Mammary epithelial cell (primary cell): ENCODE measurements at regions of chr12 and their contacts with region 1.

Region 1: DNA sequence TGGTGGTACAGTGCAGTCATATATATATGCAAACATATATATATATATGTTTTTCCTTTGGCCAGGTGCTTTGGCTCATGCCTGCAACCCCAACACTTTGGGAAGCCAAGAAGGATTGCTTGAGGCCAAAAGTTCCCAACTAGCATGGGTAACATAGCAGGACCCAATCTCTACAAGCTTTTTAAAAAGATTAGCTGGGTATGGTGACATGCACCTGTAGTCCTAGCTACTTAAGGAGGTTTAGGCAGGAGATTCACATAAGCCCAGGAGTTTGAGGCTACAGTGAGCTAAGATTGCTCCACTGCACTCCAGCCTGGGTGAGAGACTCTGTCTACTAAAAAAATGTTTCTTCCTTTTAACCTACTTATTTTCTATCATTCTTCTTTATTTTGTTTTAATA is 10.2 kb downstream of the PZP start:
- DNase-seq: no peak
- H3K4me3 ChIP-seq: no peak overlapping the region
- H3K27ac ChIP-seq: no peak overlapping the region
- H3K4me1 ChIP-seq: no peaks in the 10 kb centered on the region
- H3K27me3 ChIP-seq: peaks cover 2% of the 10 kb centered on the region
- CTCF ChIP-seq: no peak

Region 2: DNA sequence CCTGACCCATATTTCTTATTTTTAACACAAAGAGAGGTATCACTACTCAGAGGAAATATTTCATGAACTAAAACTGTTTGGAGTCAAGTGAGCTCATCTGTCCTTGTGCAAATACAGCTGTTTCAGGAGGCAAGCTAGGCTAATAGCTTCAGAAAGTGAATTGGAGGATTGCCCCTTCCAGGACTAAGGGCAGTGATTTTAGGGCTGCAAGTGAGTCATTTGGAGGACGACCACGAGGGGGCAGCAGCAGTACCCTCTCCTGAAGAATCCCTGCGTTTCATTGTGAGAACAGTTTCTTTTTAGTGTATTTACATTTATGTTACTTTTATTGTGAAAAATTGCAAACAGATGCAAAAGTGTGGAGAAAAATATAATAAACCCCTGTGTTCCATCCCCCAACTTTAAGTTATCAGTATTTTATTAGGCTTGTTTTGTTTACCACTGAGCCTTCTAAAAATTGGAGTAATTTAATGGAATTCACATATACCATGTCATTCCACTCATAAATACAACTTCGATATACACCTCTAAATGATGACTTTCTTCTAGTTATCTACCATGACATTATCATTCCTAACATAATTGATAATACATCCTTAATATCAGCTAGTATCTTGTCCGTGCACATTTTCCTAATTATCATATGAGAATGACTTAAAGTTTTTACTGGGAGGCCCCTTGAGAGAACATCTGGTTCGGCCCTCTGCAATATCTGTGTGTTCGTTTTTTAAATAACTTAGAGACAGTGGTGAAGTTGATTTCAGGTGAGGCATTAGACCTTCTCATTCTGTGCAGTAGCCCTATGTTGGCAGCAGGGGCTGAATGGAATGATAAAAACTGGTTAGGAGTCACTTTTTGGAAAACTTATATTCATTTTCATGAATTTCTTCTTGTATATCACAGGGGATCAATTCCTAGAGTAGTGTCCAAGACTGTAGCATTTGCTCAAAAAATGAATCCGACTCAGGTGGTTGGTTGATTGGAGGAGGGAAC is 1151.8 kb before region 1 on chr12:
- CTCF ChIA-PET with region 1: no interaction called
- dilution Hi-C with region 1: no loop called
- in situ Hi-C with region 1: no loop called
- intact Hi-C with region 1: no loop called
- DNase-seq: peak; percentile 43
- H3K4me3 ChIP-seq: no peak overlapping the region
- H3K27ac ChIP-seq: no peak overlapping the region
- H3K4me1 ChIP-seq: no peaks in the 10 kb centered on the region
- H3K27me3 ChIP-seq: no peaks in the 10 kb centered on the region
- CTCF ChIP-seq: peak; percentile 89 to 91

Region 3: DNA sequence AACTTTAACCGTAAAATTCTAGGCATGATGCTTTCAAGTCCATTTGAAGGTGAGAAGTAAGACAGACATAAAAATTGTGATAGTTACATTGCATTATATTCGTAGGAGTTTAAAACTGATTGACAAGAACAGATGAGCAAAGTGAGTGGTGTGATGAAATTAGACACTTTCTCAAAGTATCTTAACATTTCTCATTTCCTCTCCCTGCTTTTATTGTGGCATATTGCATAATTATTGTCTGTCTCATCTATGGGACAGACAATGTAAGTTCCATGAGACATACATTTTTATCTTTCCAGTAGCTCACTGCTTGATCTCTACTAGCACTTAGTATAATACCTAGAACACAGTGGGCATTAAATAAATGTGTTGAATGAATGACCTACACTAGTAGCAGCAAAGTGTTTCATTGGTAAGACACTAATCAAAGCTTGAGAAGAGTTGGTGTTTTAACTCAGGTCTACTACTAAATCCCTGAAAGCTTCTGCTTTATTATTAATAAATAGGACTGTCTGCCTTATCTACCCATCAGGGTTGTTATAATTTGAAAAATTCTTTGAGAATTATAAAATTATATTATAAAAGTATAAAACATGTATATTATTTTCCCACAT is 101.3 kb before region 1 on chr12:
- CTCF ChIA-PET with region 1: interaction called, 11 read pairs
- dilution Hi-C with region 1: no loop called
- in situ Hi-C with region 1: no loop called
- intact Hi-C with region 1: no loop called
- DNase-seq: peak; percentile 17
- H3K4me3 ChIP-seq: no peak overlapping the region
- H3K27ac ChIP-seq: no peak overlapping the region
- H3K4me1 ChIP-seq: no peaks in the 10 kb centered on the region
- H3K27me3 ChIP-seq: no peaks in the 10 kb centered on the region
- CTCF ChIP-seq: no peak

Region 4: GRCh38 chr12:9163392-9163791 is 34.6 kb before region 1 on chr12:
- CTCF ChIA-PET with region 1: no interaction called
- dilution Hi-C with region 1: loop called (anchors 5 kb)
- in situ Hi-C with region 1: no loop called
- intact Hi-C with region 1: no loop called
- DNase-seq: peak; percentile 69
- H3K4me3 ChIP-seq: no peak overlapping the region
- H3K27ac ChIP-seq: peak overlapping the region; percentile 37
- H3K4me1 ChIP-seq: peaks cover 19% of the 10 kb centered on the region
- H3K27me3 ChIP-seq: no peaks in the 10 kb centered on the region
- CTCF ChIP-seq: no peak